ENCODE measurements at regions of chr19 and their contacts with region 1.

Region 1: DNA sequence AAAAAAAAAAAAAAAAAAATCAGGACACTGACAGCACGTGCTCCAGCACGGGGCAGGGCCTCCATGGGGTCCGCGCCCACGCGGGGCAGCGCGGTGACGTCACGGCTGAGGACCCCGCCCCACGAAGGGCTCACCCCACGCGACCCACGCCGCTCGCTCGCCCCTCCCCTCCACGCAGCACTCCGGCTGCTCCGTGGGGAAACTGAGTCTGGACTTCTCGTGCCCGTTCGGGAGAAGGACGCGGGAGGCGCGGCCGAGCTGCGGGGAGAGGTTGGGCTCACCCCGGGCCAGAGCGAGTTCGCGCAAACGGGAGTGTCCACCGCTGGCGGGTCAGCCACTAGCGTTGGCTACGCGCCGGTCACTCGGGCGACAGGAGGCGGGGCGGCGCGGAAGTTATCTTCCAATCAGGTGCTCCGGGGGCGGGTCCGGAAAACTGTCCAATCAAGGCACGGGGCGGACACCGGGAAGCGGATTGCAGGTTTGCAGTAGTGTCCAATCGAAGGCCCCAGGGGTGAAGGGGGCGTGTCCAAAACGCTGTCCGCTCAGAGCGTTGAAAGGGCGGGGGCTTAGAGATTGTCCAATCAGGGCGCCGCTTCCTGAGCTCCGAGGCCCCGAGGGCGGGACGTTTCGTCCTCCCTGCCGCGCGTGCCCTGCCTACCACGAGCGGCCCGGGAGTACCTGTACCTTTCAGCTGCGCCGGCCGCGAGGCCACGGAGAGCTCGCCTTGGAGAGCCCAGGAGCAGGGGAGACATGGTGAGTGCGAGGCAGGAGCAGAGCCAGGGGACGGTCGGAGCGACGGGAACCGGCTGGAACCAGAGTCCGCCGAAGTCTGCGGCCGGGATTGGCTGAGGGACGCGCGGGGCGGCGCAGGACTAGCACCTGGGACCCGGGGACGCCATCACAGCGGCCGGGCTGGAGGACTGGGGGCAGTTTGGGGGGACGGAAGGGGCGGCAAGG is at the start of gene ZNF57:
- DNase-seq: peak; percentile 99
- total RNA-seq, gene ZNF57: 1.8 TPM

Region 2: DNA sequence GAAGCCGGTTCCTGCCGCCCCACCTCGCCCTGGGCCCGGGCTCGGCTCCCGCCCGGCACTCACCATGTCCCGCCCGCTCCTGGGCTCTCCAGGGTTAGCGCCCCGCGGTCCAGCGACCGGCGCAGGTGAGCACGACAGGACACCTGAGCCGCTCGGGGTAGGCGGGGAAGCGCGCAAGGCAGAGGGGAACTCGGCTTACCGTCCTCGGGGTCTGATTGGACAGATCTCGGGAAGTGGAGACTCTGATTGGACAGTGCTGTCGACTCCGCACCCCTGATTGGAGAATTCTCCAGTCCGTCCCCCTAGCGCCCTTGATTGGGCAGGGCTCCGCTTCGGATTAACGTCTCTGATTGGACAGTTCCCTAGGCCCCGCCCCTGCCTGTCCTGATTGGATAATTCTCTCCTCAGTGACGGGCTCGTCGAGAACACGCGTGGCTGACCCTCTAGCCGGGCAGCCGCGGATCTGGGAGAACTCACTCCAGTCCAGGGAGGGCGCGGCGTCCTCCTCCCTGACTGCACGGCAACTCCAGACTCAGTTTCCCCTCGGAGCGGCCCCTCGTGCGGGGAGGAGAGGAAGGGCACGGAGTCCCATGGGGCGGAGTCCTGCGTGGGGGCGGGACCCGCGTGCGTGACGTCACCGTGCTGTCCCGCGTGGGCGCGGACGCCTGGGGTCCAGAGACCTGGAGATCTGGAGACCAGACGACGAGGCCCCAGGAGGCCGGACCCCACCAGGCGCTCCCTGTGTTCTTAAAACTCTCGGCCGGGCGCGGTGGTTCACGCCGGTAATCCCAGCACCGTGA is 44.4 kb after region 1 on chr19 and contains the start of gene ZNF77:
- intact Hi-C with region 1: loop called (anchors 5 kb)
- DNase-seq: peak; percentile 98
- total RNA-seq, gene ZNF77: 2.0 TPM

Region 3: DNA sequence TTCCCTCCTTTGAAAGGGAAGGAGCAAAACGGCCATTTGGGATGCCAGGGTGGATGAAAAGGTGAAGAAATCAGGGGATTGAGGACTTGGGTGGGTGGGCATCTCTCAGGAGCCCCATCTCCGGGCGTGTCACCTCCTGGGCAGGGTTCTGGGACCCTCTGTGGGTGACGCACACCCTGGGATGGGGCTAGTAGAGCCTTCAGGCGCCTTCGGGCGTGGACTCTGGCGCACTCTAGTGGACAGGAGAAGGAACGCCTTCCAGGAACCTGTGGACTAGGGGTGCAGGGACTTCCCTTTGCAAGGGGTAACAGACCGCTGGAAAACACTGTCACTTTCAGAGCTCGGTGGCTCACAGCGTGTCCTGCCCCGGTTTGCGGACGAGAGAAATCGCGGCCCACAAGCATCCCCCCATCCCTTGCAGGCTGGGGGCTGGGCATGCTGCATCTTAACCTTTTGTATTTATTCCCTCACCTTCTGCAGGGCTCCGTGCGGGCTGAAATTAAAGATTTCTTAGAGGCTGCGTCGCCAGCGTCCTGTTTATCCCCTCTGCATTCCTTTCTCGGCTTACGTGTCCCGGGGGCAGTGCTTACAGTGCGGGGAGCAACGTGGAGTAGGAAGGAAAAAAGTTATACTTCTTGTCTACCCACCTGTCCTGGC is 262.8 kb after region 1 on chr19:
- intact Hi-C with region 1: no loop called
- DNase-seq: peak; percentile 91

Measured in cardiac septum (tissue), 1 donor.